ENCODE measurements at regions of chr1 and their contacts with region 1.

Region 1: DNA sequence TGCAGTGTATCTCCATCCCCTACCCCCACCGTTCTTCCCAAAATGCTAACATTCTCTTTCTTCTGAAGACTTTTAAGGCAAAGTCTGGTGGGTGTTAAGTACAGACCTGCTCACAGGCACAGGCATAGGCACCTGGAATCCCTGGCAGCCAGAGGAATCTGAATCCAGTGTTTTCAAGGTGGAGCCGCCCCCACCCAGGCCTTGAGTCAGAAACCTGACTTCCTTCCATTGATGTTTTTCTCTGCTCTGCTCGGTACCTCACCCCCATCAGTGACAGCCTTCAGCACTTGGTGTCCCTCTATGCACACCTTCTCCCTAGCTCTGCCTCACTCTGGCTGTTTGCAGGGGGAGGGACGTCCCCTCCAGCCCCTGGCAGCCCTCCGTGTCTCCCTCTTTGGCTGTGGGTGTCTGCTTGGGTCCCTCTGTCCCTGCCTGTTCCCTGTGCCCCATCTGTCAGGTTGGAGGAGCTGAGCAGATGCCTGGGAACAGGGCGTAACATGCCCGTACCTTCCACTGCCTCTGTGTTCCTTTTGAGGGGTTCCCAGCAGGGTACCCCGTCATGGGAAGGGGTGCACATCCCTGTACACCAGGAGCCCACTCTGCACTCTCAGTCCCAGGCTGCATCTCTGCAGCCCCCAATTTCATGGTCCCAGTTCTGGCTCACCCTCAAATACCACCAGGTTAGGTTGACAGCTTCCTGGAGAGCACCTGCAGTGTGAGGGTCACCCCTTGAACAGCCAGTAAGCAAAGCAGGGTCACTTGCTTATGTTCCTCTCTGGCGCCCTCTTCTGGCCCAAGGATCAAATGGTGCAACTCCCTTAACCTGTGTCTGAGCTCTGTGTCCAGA is 6.7 kb downstream of the NCDN start:
- DNase-seq: peak; percentile 69 to 81
- ATAC-seq: peak; percentile 60 to 83
- H3K4me3 ChIP-seq: no peak overlapping the region
- H3K27ac ChIP-seq: no peak overlapping the region
- H3K4me1 ChIP-seq: peaks cover under 1% of the 10 kb centered on the region; the same call in 1 of the 3 replicates
- CTCF ChIP-seq: peak; percentile 70
- EP300 ChIP-seq: no peak
- POLR2A ChIP-seq: no peak
- RAD21 ChIP-seq: peak; percentile 47 to 48

Region 2: GRCh38 chr1:35451125-35451528 is 113.1 kb before region 1 on chr1:
- CTCF ChIA-PET with region 1: interaction called, 45 read pairs
- POLR2A ChIA-PET with region 1: no interaction called
- DNase-seq: peak; percentile 43 to 61
- ATAC-seq: peak; percentile 94 to 98
- H3K4me3 ChIP-seq: no peak overlapping the region
- H3K27ac ChIP-seq: no peak overlapping the region
- H3K4me1 ChIP-seq: peaks cover 2% of the 10 kb centered on the region; the same call in 1 of the 3 replicates
- CTCF ChIP-seq: peak; percentile 62
- EP300 ChIP-seq: no peak
- POLR2A ChIP-seq: no peak
- RAD21 ChIP-seq: peak; percentile 61

Region 3: GRCh38 chr1:35577071-35577998 is 13.1 kb after region 1 on chr1:
- CTCF ChIA-PET with region 1: interaction called, 15 read pairs
- POLR2A ChIA-PET with region 1: no interaction called
- DNase-seq: no peak
- ATAC-seq: no peak
- H3K4me3 ChIP-seq: no peak overlapping the region
- H3K27ac ChIP-seq: no peak overlapping the region
- H3K4me1 ChIP-seq: no peaks in the 10 kb centered on the region
- CTCF ChIP-seq: no peak
- EP300 ChIP-seq: no peak
- POLR2A ChIP-seq: no peak
- RAD21 ChIP-seq: no peak

Region 4: GRCh38 chr1:35715568-35716002 is 151.3 kb after region 1 on chr1:
- CTCF ChIA-PET with region 1: interaction called, 62 read pairs
- POLR2A ChIA-PET with region 1: interaction called, 5 read pairs
- DNase-seq: peak; percentile 67 to 74
- ATAC-seq: peak; percentile 67 to 75; a peak in 5 of 6 replicates
- H3K4me3 ChIP-seq: no peak overlapping the region
- H3K27ac ChIP-seq: no peak overlapping the region
- H3K4me1 ChIP-seq: peaks cover 17% of the 10 kb centered on the region
- CTCF ChIP-seq: peak; percentile 72
- EP300 ChIP-seq: no peak
- POLR2A ChIP-seq: no peak
- RAD21 ChIP-seq: peak; percentile 49 to 63

Measured in A549 (cell line).